Transverse colon (tissue), 4 donors: ENCODE measurements at regions of chr3 and their contacts with region 1.

Region 1: GRCh38 chr3:117137065-117137464 is 427.5 kb downstream of the TUSC7 start:
- DNase-seq: no peak
- H3K4me3 ChIP-seq: no peak overlapping the region
- H3K27ac ChIP-seq: no peak overlapping the region
- H3K4me1 ChIP-seq: no peaks in the 10 kb centered on the region
- H3K27me3 ChIP-seq: no peaks in the 10 kb centered on the region
- CTCF ChIP-seq: no peak
- EP300 ChIP-seq: no peak
- POLR2A ChIP-seq: no peak

Region 2: GRCh38 chr3:115533218-115533617 is 1603.8 kb before region 1 on chr3:
- in situ Hi-C with region 1: no loop called
- intact Hi-C with region 1: loop called (anchors 5 kb)
- DNase-seq: no peak
- H3K4me3 ChIP-seq: no peak overlapping the region
- H3K27ac ChIP-seq: no peak overlapping the region
- H3K4me1 ChIP-seq: no peaks in the 10 kb centered on the region
- H3K27me3 ChIP-seq: no peaks in the 10 kb centered on the region
- CTCF ChIP-seq: no peak
- EP300 ChIP-seq: no peak
- POLR2A ChIP-seq: no peak

Region 3: DNA sequence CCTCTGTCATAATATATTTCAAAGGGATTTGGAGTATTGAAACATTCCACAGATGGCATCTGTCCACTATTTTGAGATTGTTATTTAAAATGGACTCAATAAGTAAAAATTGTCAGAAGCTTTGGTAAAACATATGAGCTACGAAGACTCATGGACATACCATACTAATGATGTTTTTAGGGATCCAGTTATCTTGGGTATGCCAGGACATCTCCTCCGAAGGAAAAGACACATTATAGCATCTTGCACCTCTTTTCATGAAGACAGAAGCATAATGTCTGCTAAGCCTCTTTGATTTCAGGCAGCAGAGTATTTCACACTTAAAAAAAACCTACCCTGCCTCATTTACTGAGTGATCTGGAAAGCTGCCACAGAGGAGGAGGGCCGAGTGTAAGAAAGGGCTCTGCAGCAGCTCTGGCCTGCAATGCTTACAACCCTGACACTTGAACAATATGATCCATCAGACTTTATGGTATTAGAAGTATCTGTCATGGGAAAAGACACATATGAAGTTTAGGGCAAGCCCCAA is 142.7 kb before region 1 on chr3:
- in situ Hi-C with region 1: no loop called
- intact Hi-C with region 1: no loop called
- DNase-seq: no peak
- H3K4me3 ChIP-seq: no peak overlapping the region
- H3K27ac ChIP-seq: no peak overlapping the region
- H3K4me1 ChIP-seq: no peaks in the 10 kb centered on the region
- H3K27me3 ChIP-seq: no peaks in the 10 kb centered on the region
- CTCF ChIP-seq: no peak
- EP300 ChIP-seq: no peak
- POLR2A ChIP-seq: no peak